Heart right ventricle (tissue), 16 donors: ENCODE measurements at regions of chr14 and their contacts with region 1.

Region 1: DNA sequence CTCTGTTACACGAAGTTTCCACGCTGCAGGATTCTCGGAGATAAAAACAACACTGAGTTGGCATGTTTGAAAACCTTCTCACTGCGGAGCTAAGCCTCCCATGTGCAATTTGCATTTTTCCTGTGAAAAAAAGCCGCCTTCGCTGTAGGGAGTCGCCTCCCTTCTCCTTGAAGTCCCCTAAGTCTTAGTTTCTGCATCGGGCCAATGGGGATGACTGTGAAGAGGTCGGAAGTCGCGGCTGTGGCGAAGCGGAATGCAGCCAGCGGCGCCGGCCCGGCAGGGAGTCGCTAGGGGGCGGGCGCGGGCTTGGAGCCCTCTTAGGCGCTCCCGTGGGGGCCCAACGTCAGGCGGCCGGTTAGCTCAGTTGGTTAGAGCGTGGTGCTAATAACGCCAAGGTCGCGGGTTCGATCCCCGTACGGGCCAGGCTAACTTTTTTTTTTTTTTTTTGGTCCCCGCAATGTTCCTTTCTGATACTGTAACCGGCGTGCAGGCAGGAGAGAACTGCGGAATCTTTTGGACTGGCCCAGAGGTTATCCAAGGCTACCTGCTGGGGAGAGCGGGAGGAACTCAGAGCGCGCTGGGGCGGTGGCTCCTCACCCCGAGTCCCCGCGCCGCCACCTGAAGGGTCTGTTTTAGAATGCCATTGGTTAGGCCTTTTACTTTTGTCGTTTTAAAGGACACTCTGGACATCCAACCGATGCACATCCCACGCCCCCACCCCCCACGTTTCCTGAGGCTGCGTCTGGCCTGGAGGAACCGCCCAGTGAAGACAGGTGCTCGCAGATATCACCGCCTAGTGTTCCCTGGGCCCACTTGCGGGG is 2.6 kb upstream of the ZNF839 start:
- DNase-seq: peak; percentile 92 to 94
- ATAC-seq: peak; percentile 78 to 89 (median 83)
- H3K4me3 ChIP-seq: peak overlapping the region; percentile 29 to 76 (median 60)
- H3K27ac ChIP-seq: peak overlapping the region; percentile 30 to 98 (median 92)
- H3K4me1 ChIP-seq: peaks cover 0 to 61% (median 51%) of the 10 kb centered on the region in 9 donors
- H3K27me3 ChIP-seq: no peaks in the 10 kb centered on the region
- CTCF ChIP-seq: peak; percentile 57 to 93 (median 87)

Region 2: GRCh38 chr14:101707068-101707842 is 609.7 kb before region 1 on chr14:
- intact Hi-C with region 1: loop called in 1 of 10 experiments (anchors 10 kb)
- DNase-seq: peak in 1 of 2 donors; percentile 79
- ATAC-seq: peak; percentile 38 to 83 (median 64)
- H3K4me3 ChIP-seq: peak overlapping the region in 2 of 10 donors; percentile 1 to 25
- H3K27ac ChIP-seq: peak overlapping the region in 9 of 10 donors; percentile 71 to 90 (median 84)
- H3K4me1 ChIP-seq: peaks cover 10 to 33% (median 25%) of the 10 kb centered on the region in 9 donors
- H3K27me3 ChIP-seq: peaks cover 0 to 29% (median 5%) of the 10 kb centered on the region in 7 donors
- CTCF ChIP-seq: peak; percentile 72 to 90 (median 84)

Region 3: DNA sequence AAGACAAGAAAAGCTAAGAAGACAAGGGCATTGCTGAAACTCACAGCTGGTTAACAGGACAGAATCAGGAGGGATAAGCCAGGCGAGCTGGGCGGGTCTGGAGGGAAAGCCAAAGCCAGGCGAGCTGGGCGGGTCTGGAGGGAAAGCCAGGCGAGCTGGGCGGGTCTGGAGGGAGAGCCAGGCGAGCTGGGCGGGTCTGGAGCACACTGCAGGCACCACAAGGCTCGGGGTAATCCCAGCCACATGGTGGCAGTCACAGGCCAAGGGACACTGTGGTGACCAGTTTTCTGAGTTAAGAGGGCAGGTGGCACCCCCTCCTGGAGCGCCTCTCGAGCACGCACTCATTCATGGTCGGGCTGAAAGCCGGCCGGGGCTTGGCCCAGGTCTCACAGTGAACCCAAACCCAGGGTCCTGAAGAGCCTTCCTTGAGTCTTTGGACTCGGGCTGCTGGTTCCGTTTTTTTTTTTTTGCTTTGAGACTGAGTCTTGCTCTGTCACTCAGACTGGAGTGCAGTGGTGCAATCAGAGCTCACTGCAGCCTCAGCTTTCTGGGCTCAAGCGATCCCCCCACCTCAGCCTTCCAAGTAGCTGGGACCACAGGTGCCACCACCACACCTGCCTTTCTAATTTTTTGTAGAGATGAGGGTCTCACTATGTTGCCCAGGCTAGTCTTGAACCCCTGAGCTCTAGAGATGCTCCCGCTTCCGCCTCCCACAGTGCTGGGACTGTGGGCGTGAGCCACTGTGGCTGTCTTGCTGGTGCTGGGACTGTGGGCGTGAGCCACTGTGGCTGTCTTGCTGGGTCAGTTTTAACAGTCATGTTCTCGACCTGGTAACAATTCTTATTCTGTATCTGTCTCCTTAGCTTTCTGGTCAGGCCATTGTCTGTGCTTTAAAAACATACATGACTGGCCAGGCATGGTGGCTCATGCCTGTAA is 270.3 kb before region 1 on chr14:
- intact Hi-C with region 1: loop called in 2 of 10 experiments (anchors 10 kb)
- DNase-seq: peak; percentile 81 to 86
- ATAC-seq: peak; percentile 86 to 94 (median 91)
- H3K4me3 ChIP-seq: no peak overlapping the region
- H3K27ac ChIP-seq: peak overlapping the region in 5 of 10 donors; percentile 19 to 58 (median 39)
- H3K4me1 ChIP-seq: peaks cover 0 to 41% (median 27%) of the 10 kb centered on the region in 9 donors
- H3K27me3 ChIP-seq: no peaks in the 10 kb centered on the region
- CTCF ChIP-seq: peak; percentile 28 to 74 (median 50)

Region 4: GRCh38 chr14:102086972-102087761 is 229.8 kb before region 1 on chr14 and contains the start of gene HSP90AA1:
- intact Hi-C with region 1: loop called in 4 of 10 experiments (anchors 2 to 10 kb)
- DNase-seq: peak; percentile 95
- ATAC-seq: peak; percentile 83 to 95 (median 91)
- H3K4me3 ChIP-seq: peak within 1 kb of the TSS; percentile 72 to 99 (median 86)
- H3K27ac ChIP-seq: peak within 1 kb of the TSS; percentile 99 to 100 (median 100)
- H3K4me1 ChIP-seq: peaks cover 5 to 55% (median 50%) of the 10 kb centered on the region in 9 donors
- H3K27me3 ChIP-seq: no peaks in the 10 kb centered on the region
- CTCF ChIP-seq: peak in 6 of 9 donors; percentile 12 to 49 (median 34)
- total RNA-seq, gene HSP90AA1: 315 to 501 (median 402) TPM

Region 5: GRCh38 chr14:102235275-102235897 is 81.6 kb before region 1 on chr14:
- intact Hi-C with region 1: loop called (anchors 1 to 5 kb)
- DNase-seq: peak; percentile 83 to 86
- ATAC-seq: peak; percentile 89 to 97 (median 95)
- H3K4me3 ChIP-seq: peak overlapping the region in 9 of 10 donors; percentile 6 to 57 (median 47)
- H3K27ac ChIP-seq: peak overlapping the region in 7 of 10 donors; percentile 23 to 70 (median 58)
- H3K4me1 ChIP-seq: peaks cover 0 to 18% (median 7%) of the 10 kb centered on the region in 9 donors
- H3K27me3 ChIP-seq: no peaks in the 10 kb centered on the region
- CTCF ChIP-seq: peak; percentile 69 to 93 (median 88)

Region 6: GRCh38 chr14:102509744-102510615 is 193.0 kb after region 1 on chr14 and contains the start of gene ANKRD9:
- intact Hi-C with region 1: loop called in 2 of 10 experiments (anchors 10 kb)
- DNase-seq: peak; percentile 96 to 97
- ATAC-seq: peak; percentile 72 to 91 (median 86)
- H3K4me3 ChIP-seq: peak within 1 kb of the TSS; percentile 60 to 83 (median 74)
- H3K27ac ChIP-seq: peak within 1 kb of the TSS; percentile 89 to 97 (median 94)
- H3K4me1 ChIP-seq: peaks cover 0 to 41% (median 20%) of the 10 kb centered on the region in 9 donors
- H3K27me3 ChIP-seq: no peaks in the 10 kb centered on the region
- CTCF ChIP-seq: peak in 1 of 9 donors; percentile 8
- total RNA-seq, gene ANKRD9: 94.4 to 264 (median 124) TPM